SK-N-SH (cell line): ENCODE measurements at regions of chr17 and their contacts with region 1.

Region 1: DNA sequence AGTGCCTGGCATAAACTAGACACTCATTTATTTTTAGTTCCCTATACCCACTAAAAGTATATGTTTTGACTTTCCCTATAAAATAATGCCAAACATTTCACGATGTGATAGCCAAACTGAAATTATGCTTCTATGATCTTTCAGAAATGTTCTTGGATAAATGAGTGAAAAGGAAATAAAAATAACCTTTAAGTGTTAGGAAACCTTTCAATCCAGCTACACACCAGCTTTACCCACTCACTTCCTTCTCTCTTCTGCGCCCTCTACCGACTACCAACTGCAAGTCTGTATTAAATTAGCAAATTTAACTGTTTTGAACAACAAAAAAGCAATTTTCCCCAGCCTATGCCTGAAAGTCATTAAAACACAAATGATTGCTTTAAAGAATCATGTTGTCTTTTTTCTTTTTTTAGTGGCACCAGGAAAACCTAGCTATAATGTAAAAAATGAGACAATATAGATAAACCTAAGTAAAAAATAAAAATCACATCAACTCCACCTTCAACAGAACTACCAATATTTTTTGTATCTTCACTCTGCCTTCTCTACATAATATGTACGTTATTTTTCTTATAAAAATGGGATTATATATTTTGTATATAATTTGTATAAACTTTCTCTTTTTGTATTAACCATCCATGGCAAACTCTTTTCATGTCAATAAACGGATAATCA is 13.2 kb upstream of the TMEM100 start:
- DNase-seq: peak; percentile 52
- H3K4me3 ChIP-seq: no peak overlapping the region; a peak in 1 of 4 replicates
- H3K27ac ChIP-seq: no peak overlapping the region
- H3K4me1 ChIP-seq: peaks cover 14 to 39% of the 10 kb centered on the region in 2 experiments
- H3K27me3 ChIP-seq: no peaks in the 10 kb centered on the region
- CTCF ChIP-seq: peak; percentile 89
- EP300 ChIP-seq: no peak
- RAD21 ChIP-seq: peak; percentile 77

Region 2: GRCh38 chr17:55533608-55534007 is 202.3 kb before region 1 on chr17:
- CTCF ChIA-PET with region 1: interaction called, 175 read pairs
- POLR2A ChIA-PET with region 1: no interaction called
- DNase-seq: no peak
- H3K4me3 ChIP-seq: no peak overlapping the region
- H3K27ac ChIP-seq: peak overlapping the region in 1 of 2 experiments; percentile 26; a peak in 2 of 4 replicates
- H3K4me1 ChIP-seq: peaks cover 0 to 13% of the 10 kb centered on the region in 2 experiments; a peak in 2 of 4 replicates
- H3K27me3 ChIP-seq: no peaks in the 10 kb centered on the region
- CTCF ChIP-seq: no peak
- EP300 ChIP-seq: no peak
- RAD21 ChIP-seq: no peak

Region 3: DNA sequence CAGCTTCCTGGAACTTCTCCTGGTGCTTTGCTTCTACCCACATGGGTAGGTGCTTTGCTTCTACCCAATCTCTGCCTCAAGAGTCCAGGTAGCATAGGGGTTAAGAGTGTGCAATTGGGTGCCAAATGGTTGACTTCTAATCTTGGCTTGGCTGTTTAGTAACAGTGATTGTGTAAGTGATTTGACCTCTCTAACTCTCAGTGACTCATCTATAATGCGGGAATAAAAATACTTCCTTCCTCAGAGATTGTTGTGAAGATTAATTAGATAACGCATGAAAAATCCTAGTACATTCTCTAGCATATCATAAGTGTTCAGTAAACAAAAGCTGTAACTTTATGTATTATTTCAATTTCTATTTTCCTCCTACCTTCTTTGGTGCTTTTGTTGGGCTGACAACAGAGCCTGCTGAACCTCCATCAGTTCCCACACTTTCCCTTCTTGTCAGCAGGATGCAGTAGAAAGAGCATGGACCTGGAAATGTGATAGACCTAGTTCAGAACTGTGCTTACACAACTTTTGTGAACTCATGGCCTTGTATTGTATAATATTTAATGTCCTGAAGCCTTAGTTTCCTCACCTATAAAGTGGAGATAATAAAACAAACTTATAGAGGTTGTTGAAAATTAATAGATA is 151.7 kb before region 1 on chr17:
- CTCF ChIA-PET with region 1: no interaction called
- POLR2A ChIA-PET with region 1: no interaction called
- DNase-seq: no peak
- H3K4me3 ChIP-seq: no peak overlapping the region
- H3K27ac ChIP-seq: no peak overlapping the region
- H3K4me1 ChIP-seq: peaks cover 2 to 14% of the 10 kb centered on the region in 2 experiments; a peak in 2 of 4 replicates
- H3K27me3 ChIP-seq: no peaks in the 10 kb centered on the region
- CTCF ChIP-seq: no peak
- EP300 ChIP-seq: no peak
- RAD21 ChIP-seq: no peak

Region 4: DNA sequence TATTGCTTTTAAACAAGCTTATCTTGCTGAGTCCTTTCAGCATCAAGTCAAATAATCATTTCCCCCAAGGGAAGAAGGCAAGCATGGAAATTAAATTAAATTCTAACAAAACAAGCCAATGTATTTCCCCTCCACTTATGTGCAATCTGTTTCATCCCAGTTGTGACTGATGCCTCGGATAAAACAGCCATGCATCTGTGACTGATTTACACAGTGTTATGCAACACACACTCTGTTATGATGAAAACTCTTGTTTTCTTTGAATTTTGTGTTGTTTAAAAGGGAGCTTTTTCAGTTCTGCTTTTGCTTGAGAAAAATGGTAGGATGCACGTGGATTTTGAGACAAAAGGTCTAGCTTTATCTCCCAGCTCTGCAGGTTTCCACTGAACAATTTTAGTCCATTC is 45.8 kb before region 1 on chr17:
- CTCF ChIA-PET with region 1: interaction called, 20 read pairs
- POLR2A ChIA-PET with region 1: no interaction called
- DNase-seq: peak; percentile 58
- H3K4me3 ChIP-seq: no peak overlapping the region
- H3K27ac ChIP-seq: peak overlapping the region in 1 of 2 experiments; percentile 99; a peak in 2 of 4 replicates
- H3K4me1 ChIP-seq: peaks cover 0 to 54% of the 10 kb centered on the region in 2 experiments; a peak in 3 of 4 replicates
- H3K27me3 ChIP-seq: no peaks in the 10 kb centered on the region
- CTCF ChIP-seq: no peak
- EP300 ChIP-seq: peak; percentile 22 to 99; a peak in 2 of 4 replicates
- RAD21 ChIP-seq: peak; percentile 38

Region 5: DNA sequence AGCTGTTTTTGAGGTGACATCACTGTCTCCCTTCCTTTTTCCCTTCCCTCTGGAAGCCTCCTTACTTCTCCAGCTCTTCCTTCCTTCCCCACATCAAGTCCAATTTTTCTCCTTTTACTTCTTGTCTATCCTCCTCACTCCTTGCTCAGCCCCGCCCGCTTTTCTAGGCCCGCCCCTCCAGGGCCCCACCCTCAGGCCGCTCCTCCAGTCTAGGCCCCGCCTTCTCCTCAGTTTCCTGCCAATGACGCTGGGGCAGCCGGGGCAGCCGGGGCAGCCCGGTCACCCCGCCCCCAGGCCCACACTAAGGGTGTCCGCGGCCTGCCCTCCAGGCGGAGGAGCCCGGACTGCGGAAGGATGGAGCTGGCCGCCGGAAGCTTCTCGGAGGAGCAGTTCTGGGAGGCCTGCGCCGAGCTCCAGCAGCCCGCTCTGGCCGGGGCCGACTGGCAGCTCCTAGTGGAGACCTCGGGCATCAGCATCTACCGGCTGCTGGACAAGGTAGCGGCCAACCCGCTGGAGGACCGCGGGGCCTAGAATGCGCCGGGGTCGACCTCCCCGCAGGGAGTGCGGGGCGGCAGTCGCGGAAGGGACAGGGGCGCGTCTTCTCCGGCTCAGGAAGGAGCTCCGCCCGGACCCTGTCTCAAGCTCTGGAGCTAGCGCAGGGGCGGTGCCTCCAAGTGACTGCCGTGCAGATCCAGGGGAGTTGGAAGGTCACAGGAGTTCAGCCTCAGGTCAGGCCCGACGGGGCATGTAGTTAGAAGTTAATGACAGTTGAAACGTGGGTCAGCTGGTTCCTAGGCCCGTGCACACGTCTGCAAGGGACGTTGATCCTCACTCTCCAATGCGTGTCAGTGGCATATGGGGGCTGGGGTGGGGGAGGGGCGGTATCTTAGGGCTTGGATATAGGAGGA is 15.1 kb after region 1 on chr17 and contains the start of gene PCTP:
- CTCF ChIA-PET with region 1: interaction called, 139 read pairs
- POLR2A ChIA-PET with region 1: interaction called, 9 read pairs
- DNase-seq: peak; percentile 98
- H3K4me3 ChIP-seq: peak within 1 kb of the TSS; percentile 86 to 98
- H3K27ac ChIP-seq: peak within 1 kb of the TSS; percentile 74 to 94
- H3K4me1 ChIP-seq: peaks cover 0 to 10% of the 10 kb centered on the region in 2 experiments; a peak in 2 of 4 replicates
- H3K27me3 ChIP-seq: no peaks in the 10 kb centered on the region
- CTCF ChIP-seq: peak; percentile 52
- EP300 ChIP-seq: peak in 1 of 2 experiments; percentile 66; a peak in 1 of 4 replicates
- RAD21 ChIP-seq: peak; percentile 32
- polyA plus RNA-seq, gene PCTP: 20.8 and 25.1 TPM in 2 replicates

Region 6: GRCh38 chr17:55825213-55825612 is 89.3 kb after region 1 on chr17:
- CTCF ChIA-PET with region 1: no interaction called
- POLR2A ChIA-PET with region 1: no interaction called
- DNase-seq: no peak
- H3K4me3 ChIP-seq: no peak overlapping the region
- H3K27ac ChIP-seq: no peak overlapping the region
- H3K4me1 ChIP-seq: peaks cover 0 to 2% of the 10 kb centered on the region in 2 experiments; a peak in 2 of 4 replicates
- H3K27me3 ChIP-seq: peaks cover 4% of the 10 kb centered on the region; the same call in 1 of the 2 replicates
- CTCF ChIP-seq: peak; percentile 41
- EP300 ChIP-seq: no peak
- RAD21 ChIP-seq: peak; percentile 62